BJ (cell line): ENCODE measurements at regions of chr11 and their contacts with region 1.

Region 1: DNA sequence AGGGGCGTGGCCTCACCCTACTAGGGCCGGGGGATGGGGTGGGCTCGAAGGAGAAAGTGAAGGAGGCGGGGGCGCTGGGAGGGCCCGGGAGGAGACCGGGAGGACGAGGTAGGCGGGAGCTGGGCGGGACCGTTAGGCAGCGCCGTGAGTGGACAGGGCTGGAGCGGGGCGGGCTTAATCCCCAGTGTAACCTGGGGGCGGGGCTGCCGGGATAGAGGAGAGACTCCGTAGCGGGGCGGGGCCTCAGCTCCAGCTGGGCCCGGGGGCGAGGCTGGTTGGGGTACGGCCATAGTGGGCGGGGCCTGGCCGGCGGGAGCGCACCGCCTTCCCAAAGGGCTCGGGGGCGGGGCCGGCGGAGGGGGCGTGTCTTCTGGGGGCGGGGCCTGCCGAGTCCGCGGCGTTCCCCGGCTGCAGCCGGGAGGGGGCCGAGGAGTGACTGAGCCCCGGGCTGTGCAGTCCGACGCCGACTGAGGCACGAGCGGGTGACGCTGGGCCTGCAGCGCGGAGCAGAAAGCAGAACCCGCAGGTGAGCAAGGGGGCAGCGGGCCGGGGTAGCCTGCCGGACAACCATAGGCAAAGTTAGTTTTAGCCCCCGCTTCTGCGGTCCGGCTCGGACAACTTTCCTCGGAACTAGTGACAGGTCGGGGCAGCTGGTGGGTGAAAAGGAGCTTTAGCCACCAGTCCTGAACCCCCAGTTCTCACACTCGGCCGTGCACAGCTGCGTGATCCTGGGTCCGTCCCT is at the start of gene CD82:
- DNase-seq: peak; percentile 86
- H3K4me3 ChIP-seq: peak within 1 kb of the TSS; percentile 46
- H3K27me3 ChIP-seq: no peaks in the 10 kb centered on the region
- CTCF ChIP-seq: peak; percentile 39
- polyA plus RNA-seq, gene CD82: 13.4 and 28.1 TPM in 2 replicates

Region 2: DNA sequence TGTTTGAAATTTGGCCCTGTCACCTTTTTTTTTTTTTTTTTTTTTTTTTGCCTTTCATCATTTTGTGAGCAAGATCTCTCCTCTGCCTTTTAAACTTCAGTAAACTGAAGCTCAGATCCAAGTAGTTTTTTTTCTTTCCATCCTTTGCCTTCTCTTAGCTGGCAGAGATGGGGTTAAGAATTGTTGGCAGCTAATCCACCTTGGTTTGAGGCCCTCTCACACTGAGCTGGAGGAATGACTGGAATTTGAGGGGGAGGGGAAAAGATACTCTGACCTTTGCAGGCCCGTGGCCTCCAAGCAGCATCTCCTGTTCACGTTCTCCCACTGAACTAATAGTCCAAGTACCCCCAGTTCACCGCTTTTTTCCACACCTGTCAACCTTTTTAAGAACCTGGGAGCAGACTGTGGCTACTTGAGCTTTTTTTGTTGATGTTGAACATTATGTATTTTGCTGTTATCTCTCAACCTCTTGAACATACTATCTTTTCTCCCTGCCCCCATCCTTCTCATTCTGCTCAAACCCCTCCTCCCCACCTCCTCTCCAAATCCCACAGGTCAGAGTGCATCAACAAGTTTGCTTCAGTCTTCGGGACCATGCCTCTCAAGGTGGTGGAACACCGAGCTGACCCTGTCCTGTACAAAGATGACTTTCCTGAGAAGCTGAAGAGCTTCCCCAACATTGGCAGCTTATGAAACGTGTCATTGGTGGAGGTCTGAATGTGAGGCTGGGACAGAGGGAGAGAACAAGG is 321.6 kb before region 1 on chr11:
- CTCF ChIA-PET with region 1: no interaction called
- POLR2A ChIA-PET with region 1: interaction called, 30 read pairs
- DNase-seq: no peak
- H3K4me3 ChIP-seq: no peak overlapping the region
- H3K27me3 ChIP-seq: no peaks in the 10 kb centered on the region
- CTCF ChIP-seq: no peak

Region 3: DNA sequence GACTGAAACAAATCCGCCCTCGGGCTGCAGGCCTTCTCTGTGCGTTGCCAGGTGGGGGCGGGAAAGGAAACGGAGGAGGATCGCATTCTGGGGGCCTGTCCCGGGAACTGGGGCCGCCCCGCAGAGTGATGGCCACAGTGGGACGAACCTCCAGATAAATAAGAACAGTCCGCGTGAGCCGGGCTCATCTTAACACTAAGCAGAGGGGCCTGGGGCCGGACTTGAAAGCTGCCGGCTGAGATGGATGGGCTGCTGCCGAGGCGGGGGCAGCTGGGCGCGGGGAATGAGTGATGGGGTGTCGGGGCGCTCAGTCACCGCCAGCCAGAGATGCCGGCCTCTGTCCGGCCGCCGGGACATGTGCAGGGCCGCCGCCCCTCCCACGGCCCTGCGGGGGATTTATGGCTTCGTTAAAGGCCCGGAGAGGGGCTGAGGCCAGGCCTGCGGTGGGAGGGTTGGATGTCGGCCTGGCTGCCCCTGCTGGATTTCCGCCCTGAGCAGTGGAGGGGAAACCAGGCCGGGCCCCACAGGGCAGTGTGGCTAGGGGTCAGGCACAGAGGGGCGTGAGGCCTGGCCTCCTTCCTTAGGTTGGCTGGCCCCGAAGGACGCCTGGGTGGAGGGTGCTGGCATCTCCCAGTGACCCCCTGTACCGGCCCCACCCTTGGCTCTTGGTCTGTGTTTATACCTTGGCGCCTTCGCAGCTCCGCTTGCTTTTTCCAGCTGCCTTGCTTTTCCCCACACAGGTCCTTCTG is 45.2 kb before region 1 on chr11:
- CTCF ChIA-PET with region 1: no interaction called
- POLR2A ChIA-PET with region 1: no interaction called
- DNase-seq: no peak
- H3K4me3 ChIP-seq: no peak overlapping the region
- H3K27me3 ChIP-seq: peaks cover 13% of the 10 kb centered on the region
- CTCF ChIP-seq: no peak

Region 4: DNA sequence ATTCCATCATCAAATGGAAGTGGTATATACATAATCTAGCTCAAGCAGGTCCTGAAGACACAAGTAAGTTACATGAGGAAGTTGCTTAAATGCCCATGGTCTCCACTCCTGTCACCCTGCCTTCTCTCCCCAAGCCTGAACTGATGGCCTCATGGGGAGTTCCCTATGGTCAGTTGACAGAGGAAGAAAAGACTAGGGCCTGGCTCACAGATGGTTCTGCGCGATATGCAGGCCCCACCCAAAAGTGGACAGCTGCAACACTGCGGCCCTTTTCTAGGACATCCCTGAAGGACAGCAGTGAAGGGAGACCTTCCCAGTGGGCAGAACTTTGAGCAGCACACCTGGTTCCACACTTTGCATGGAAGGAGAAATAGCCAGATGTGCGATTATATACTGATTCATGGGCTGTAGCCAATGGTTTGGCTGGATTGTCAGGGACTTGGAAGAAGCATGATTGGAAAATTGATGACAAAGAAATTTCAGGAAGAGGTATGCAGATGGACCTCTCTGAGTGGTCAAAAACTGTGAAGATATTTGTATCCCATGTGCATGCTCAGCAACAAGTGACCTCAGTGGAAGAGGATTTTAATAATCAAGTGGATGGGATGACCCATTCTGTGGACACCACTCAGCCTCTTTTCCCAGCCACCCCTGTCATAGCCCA is 17.2 kb before region 1 on chr11:
- CTCF ChIA-PET with region 1: no interaction called
- POLR2A ChIA-PET with region 1: no interaction called
- DNase-seq: no peak
- H3K4me3 ChIP-seq: no peak overlapping the region
- H3K27me3 ChIP-seq: peaks cover 4% of the 10 kb centered on the region
- CTCF ChIP-seq: no peak

Region 5: GRCh38 chr11:44694443-44694842 is 129.1 kb after region 1 on chr11:
- CTCF ChIA-PET with region 1: no interaction called
- POLR2A ChIA-PET with region 1: no interaction called
- DNase-seq: no peak
- H3K4me3 ChIP-seq: no peak overlapping the region
- H3K27me3 ChIP-seq: peaks cover 1% of the 10 kb centered on the region; the same call in 1 of the 2 replicates
- CTCF ChIP-seq: no peak